ENCODE measurements at regions of chr1 and their contacts with region 1.

Region 1: GRCh38 chr1:27044613-27045151 is 32.0 kb upstream of the TENT5B start:
- DNase-seq: peak; percentile 85
- H3K4me3 Mint-ChIP-seq: no peak overlapping the region
- H3K27ac Mint-ChIP-seq: no peak overlapping the region
- H3K4me1 Mint-ChIP-seq: peaks cover 9% of the 10 kb centered on the region
- H3K27me3 Mint-ChIP-seq: no peaks in the 10 kb centered on the region
- CTCF ChIP-seq: peak; percentile 98

Region 2: DNA sequence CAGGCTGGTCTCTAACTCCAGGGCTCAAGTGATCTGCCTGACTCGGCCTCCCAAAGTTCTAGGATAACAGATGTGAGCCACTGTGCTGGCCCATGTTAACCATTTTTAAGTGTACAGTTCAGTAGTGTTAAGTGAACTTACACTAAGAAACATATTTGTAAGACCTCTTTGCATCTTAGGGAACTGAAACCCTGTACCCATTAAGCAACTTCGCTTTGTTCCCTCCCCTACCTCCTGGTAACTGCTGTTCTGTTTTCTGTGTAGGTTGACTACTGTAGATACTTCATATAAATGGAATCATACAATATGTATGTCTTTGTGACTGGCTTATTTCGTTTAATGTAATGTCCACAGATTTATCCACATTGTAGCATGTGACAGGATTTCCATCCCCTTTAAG is 112.2 kb before region 1 on chr1:
- CTCF ChIA-PET with region 1: no interaction called
- POLR2A ChIA-PET with region 1: no interaction called
- intact Hi-C with region 1: no loop called
- DNase-seq: no peak
- H3K4me3 Mint-ChIP-seq: no peak overlapping the region
- H3K27ac Mint-ChIP-seq: no peak overlapping the region
- H3K4me1 Mint-ChIP-seq: no peaks in the 10 kb centered on the region
- H3K27me3 Mint-ChIP-seq: no peaks in the 10 kb centered on the region
- CTCF ChIP-seq: no peak

Region 3: GRCh38 chr1:26999440-26999987 is 45.2 kb before region 1 on chr1:
- CTCF ChIA-PET with region 1: interaction called, 39 read pairs
- POLR2A ChIA-PET with region 1: interaction called, 23 read pairs
- intact Hi-C with region 1: loop called (anchors 1 kb)
- DNase-seq: peak; percentile 99
- H3K4me3 Mint-ChIP-seq: peak overlapping the region; percentile 80
- H3K27ac Mint-ChIP-seq: peak overlapping the region; percentile 92
- H3K4me1 Mint-ChIP-seq: peaks cover 45% of the 10 kb centered on the region
- H3K27me3 Mint-ChIP-seq: no peaks in the 10 kb centered on the region
- CTCF ChIP-seq: no peak

Region 4: GRCh38 chr1:27031235-27032118 is 13.2 kb before region 1 on chr1:
- CTCF ChIA-PET with region 1: interaction called, 58 read pairs
- POLR2A ChIA-PET with region 1: interaction called, 5 read pairs
- intact Hi-C with region 1: no loop called
- DNase-seq: peak; percentile 89
- H3K4me3 Mint-ChIP-seq: peak overlapping the region; percentile 48
- H3K27ac Mint-ChIP-seq: peak overlapping the region; percentile 85
- H3K4me1 Mint-ChIP-seq: peaks cover 25% of the 10 kb centered on the region
- H3K27me3 Mint-ChIP-seq: no peaks in the 10 kb centered on the region
- CTCF ChIP-seq: no peak

Region 5: GRCh38 chr1:27071049-27071416 is 26.4 kb after region 1 on chr1:
- CTCF ChIA-PET with region 1: interaction called, 10 read pairs
- POLR2A ChIA-PET with region 1: no interaction called
- intact Hi-C with region 1: no loop called
- DNase-seq: no peak
- H3K4me3 Mint-ChIP-seq: no peak overlapping the region
- H3K27ac Mint-ChIP-seq: no peak overlapping the region
- H3K4me1 Mint-ChIP-seq: peaks cover 8% of the 10 kb centered on the region
- H3K27me3 Mint-ChIP-seq: no peaks in the 10 kb centered on the region
- CTCF ChIP-seq: no peak

Region 6: DNA sequence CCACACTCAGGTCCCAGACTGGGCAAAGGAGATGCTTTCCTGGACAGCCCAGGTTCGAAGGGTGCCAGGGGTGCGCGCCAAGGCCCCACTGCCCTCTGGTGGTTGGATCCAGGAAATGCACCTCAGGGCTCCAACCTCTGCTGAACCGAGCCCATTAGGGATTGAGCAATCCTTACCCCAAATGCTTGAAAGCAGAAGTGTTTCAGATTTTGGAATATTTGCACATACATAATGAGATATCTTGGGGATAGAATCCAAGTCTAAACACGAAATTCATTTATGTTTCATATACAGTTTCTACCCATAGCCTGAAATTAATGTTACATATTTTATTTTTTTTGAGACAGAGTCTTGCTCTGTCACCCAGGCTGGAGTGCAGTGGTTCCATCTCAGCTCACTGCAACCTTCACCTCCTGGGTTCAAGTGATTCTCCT is 52.8 kb after region 1 on chr1:
- CTCF ChIA-PET with region 1: interaction called, 345 read pairs
- POLR2A ChIA-PET with region 1: interaction called, 26 read pairs
- intact Hi-C with region 1: loop called (anchors 1 kb)
- DNase-seq: peak; percentile 86
- H3K4me3 Mint-ChIP-seq: no peak overlapping the region
- H3K27ac Mint-ChIP-seq: peak overlapping the region; percentile 43
- H3K4me1 Mint-ChIP-seq: peaks cover 24% of the 10 kb centered on the region
- H3K27me3 Mint-ChIP-seq: no peaks in the 10 kb centered on the region
- CTCF ChIP-seq: peak; percentile 94

Region 7: GRCh38 chr1:27127419-27127818 is 82.7 kb after region 1 on chr1:
- CTCF ChIA-PET with region 1: no interaction called
- POLR2A ChIA-PET with region 1: no interaction called
- intact Hi-C with region 1: no loop called
- DNase-seq: no peak
- H3K4me3 Mint-ChIP-seq: no peak overlapping the region
- H3K27ac Mint-ChIP-seq: no peak overlapping the region
- H3K4me1 Mint-ChIP-seq: peaks cover 13% of the 10 kb centered on the region
- H3K27me3 Mint-ChIP-seq: no peaks in the 10 kb centered on the region
- CTCF ChIP-seq: no peak

Region 8: GRCh38 chr1:27218736-27219135 is 174.1 kb after region 1 on chr1:
- CTCF ChIA-PET with region 1: no interaction called
- POLR2A ChIA-PET with region 1: no interaction called
- intact Hi-C with region 1: no loop called
- DNase-seq: no peak
- H3K4me3 Mint-ChIP-seq: no peak overlapping the region
- H3K27ac Mint-ChIP-seq: no peak overlapping the region
- H3K4me1 Mint-ChIP-seq: no peaks in the 10 kb centered on the region
- H3K27me3 Mint-ChIP-seq: no peaks in the 10 kb centered on the region
- CTCF ChIP-seq: no peak

Region 9: GRCh38 chr1:27284425-27285273 is 240.0 kb after region 1 on chr1:
- CTCF ChIA-PET with region 1: interaction called, 7 read pairs
- POLR2A ChIA-PET with region 1: no interaction called
- intact Hi-C with region 1: loop called (anchors 1 kb)
- DNase-seq: peak; percentile 83
- H3K4me3 Mint-ChIP-seq: no peak overlapping the region
- H3K27ac Mint-ChIP-seq: no peak overlapping the region
- H3K4me1 Mint-ChIP-seq: no peaks in the 10 kb centered on the region
- H3K27me3 Mint-ChIP-seq: no peaks in the 10 kb centered on the region
- CTCF ChIP-seq: peak; percentile 75

Measured in MCF 10A (cell line).